ENCODE measurements at regions of chr5 and their contacts with region 1.

Region 1: GRCh38 chr5:163437309-163438182 is at the start of gene CCNG1:
- DNase-seq: peak; percentile 97
- H3K4me3 ChIP-seq: peak within 1 kb of the TSS; percentile 85
- H3K27ac ChIP-seq: peak within 1 kb of the TSS; percentile 24
- H3K4me1 ChIP-seq: peaks cover 19% of the 10 kb centered on the region
- CTCF ChIP-seq: no peak
- total RNA-seq, gene CCNG1: 83.0 and 93.5 TPM in 2 replicates

Region 2: DNA sequence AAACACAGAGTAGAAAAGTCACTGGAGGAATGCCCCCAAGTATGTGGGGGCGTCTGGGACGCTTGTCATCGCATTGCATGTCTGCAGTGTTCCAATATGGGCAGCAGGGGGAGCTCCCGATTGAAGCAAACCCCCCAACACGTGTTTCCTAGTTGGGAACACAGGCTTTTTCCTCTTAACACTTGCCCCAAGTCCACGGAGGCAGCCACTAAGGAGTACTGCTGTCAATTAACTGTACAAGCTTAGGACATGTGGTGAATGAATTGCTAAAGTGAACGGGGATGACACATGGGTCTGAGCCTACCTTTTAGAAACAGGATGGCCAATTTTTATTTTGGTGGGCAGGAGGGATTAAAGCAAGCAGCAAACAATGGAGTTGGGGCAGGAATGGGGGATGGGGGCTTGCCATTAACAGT is 1893.2 kb before region 1 on chr5:
- CTCF ChIA-PET with region 1: no interaction called
- POLR2A ChIA-PET with region 1: no interaction called
- intact Hi-C with region 1: loop called (anchors 10 kb)
- DNase-seq: peak; percentile 76
- H3K4me3 ChIP-seq: peak overlapping the region; percentile 92
- H3K27ac ChIP-seq: no peak overlapping the region
- H3K4me1 ChIP-seq: peaks cover 13% of the 10 kb centered on the region
- CTCF ChIP-seq: peak; percentile 95

Region 3: DNA sequence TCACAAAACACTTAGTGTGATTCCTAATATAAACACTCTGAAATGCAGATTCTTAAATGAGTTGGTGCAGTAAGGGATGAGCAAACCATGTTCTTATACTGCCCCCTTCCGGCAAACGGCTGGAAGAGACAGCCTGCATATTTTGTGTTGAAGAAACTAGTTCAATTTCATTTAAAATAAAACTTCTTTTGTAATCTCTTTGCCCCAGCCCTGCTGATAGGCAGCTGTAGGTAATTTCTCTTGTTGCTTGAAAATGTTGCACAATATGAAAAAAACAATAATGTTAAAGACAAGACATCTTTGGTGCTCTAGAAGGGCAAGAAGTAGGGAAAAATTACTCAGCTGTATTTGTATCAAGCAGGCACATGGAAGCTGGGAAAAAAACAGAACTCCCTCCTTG is 89.9 kb before region 1 on chr5:
- CTCF ChIA-PET with region 1: no interaction called
- POLR2A ChIA-PET with region 1: no interaction called
- intact Hi-C with region 1: no loop called
- DNase-seq: peak; percentile 70
- H3K4me3 ChIP-seq: no peak overlapping the region
- H3K27ac ChIP-seq: no peak overlapping the region
- H3K4me1 ChIP-seq: no peaks in the 10 kb centered on the region
- CTCF ChIP-seq: peak; percentile 99

Region 4: DNA sequence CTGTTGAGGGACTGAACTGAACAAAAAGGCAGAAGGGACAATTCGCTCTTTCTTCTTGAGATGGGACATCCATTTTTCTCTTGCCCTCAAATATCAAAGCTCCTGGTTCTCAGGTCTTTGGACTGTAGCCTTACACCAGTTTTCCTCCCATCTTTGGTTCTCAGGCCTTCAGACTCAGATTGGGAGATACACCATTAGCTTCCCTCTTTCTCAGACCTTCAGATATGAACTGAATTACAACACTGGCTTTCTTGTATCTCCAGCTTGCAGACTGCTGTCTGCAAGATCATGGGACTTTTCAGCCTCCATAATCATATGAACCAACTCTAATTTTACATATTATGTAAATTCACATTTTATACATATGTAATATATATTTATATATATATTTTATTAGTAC is 12.7 kb before region 1 on chr5:
- CTCF ChIA-PET with region 1: no interaction called
- POLR2A ChIA-PET with region 1: no interaction called
- intact Hi-C with region 1: no loop called
- DNase-seq: no peak
- H3K4me3 ChIP-seq: no peak overlapping the region
- H3K27ac ChIP-seq: no peak overlapping the region
- H3K4me1 ChIP-seq: no peaks in the 10 kb centered on the region
- CTCF ChIP-seq: no peak

Region 5: GRCh38 chr5:163459922-163460766 is 22.6 kb after region 1 on chr5 and contains the starts of genes HMMR and NUDCD2:
- CTCF ChIA-PET with region 1: interaction called, 5 read pairs
- POLR2A ChIA-PET with region 1: interaction called, 197 read pairs
- intact Hi-C with region 1: loop called (anchors 2 kb)
- DNase-seq: peak; percentile 98
- H3K4me3 ChIP-seq: peak within 1 kb of the TSS; percentile 90
- H3K27ac ChIP-seq: peak within 1 kb of the TSS; percentile 92
- H3K4me1 ChIP-seq: peaks cover 43% of the 10 kb centered on the region
- CTCF ChIP-seq: no peak; the same call in 1 of the 2 replicates
- total RNA-seq, gene HMMR: 44.1 and 63.2 TPM in 2 replicates
- total RNA-seq, gene NUDCD2: 30.0 and 59.0 TPM in 2 replicates

Region 6: DNA sequence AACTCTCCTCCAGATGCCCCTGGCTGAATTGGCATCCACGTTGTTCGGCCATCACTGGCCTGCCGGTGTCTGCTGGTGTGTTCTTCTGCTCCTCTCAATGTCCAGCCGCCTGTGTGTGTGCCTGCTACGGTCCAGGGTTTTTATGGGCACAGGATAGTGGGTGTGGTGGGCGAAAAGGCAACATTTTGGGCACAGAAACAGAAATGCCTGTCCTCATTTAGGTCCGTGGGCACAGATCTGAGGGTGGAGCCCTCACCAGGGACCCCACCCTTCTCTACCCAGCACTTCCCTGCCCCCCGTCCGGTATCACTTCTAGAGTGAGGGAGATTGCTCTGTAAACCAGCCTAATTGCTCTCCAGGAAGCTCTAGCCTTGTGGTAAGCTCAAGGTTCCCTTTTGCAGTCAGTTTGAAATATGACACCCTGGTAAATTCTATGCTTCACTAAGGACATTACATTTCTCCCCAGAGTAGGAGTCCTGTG is 478.0 kb after region 1 on chr5:
- CTCF ChIA-PET with region 1: no interaction called
- POLR2A ChIA-PET with region 1: no interaction called
- intact Hi-C with region 1: loop called (anchors 10 kb)
- DNase-seq: peak; percentile 93
- H3K4me3 ChIP-seq: peak overlapping the region; percentile 61
- H3K27ac ChIP-seq: peak overlapping the region; percentile 99
- H3K4me1 ChIP-seq: peaks cover 58% of the 10 kb centered on the region
- CTCF ChIP-seq: no peak

Measured in OCI-LY7 (cell line).